Astrocyte of the cerebellum (primary cell): ENCODE measurements at regions of chr4 and their contacts with region 1.

Region 1: GRCh38 chr4:187826721-187827120 is 168.8 kb upstream of the ZFP42 start:
- DNase-seq: no peak
- H3K4me3 ChIP-seq: no peak overlapping the region
- CTCF ChIP-seq: no peak

Region 2: GRCh38 chr4:187782286-187782824 is 44.4 kb before region 1 on chr4:
- in situ Hi-C with region 1: loop called (anchors 5 kb)
- DNase-seq: no peak
- H3K4me3 ChIP-seq: no peak overlapping the region
- CTCF ChIP-seq: no peak